Testis (tissue), 5 donors: ENCODE measurements at regions of chr3 and their contacts with region 1.

Region 1: DNA sequence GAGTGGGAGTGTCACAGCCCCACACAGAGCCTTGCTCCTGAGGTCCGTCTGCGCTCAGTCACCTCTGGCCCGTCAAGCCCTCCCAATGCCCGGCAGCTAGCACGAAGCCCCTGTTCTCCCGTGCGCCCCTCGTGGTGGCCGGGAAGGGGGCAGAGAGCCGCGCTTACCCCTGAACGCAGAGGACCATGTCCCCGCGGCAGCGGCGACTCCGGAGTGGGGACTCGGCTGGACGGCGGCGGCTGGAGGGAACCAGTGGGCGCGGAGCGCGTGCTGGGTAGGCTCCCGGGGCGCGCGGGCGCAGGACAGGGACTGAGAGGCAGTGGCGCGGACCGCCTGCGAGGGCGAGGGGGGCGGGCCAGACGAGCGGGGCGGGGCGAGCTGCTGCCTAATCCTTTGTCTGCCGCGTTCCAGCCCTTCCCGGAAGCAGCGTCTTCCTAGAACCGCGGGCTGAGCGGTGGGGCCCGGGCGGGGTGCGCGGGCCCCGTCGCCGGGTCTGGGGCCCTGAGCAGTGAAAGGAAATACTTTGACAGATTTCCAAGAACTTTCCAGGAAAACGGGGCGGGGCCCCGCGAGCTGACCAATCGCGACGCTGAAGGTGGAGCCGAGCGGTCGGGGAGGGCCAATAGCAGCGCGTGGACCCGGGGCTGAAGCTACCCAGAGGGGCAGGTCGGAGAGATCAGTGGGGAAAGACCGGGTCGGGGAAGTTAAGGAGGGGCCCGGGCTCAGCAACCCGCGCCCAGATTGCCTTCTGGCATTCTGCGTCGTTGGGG is at the start of gene CISH:
- DNase-seq: peak; percentile 95
- H3K4me3 ChIP-seq: peak within 1 kb of the TSS; percentile 61 to 76
- H3K27ac ChIP-seq: peak within 1 kb of the TSS; percentile 76 to 84
- H3K4me1 ChIP-seq: peaks cover 33% of the 10 kb centered on the region
- H3K27me3 ChIP-seq: no peaks in the 10 kb centered on the region
- CTCF ChIP-seq: peak in 2 of 3 experiments; percentile 3 to 38
- POLR2A ChIP-seq: no peak
- total RNA-seq, gene CISH: 1.3 to 3.7 TPM

Region 2: DNA sequence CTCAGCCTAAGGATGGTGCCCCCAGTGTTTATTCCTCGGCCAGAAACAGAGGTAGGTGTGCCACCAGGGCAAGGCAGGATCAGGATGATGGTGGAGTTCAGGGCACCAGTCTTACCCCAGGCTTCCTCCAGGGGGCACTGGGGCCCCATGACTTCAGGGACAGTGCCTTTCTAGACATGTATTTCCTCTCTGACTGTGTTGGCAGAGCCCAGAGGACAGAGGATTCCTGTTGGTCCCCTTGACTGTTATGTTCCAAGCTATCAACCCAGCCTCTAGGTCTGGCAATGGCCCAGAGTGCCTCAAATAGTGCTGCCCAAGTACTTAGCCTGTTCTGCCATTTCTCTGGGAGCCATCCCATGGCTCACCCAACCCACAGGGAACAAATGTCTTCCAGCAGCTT is 39.5 kb before region 1 on chr3:
- intact Hi-C with region 1: loop called (anchors 5 kb)
- DNase-seq: peak; percentile 77
- H3K4me3 ChIP-seq: no peak overlapping the region
- H3K27ac ChIP-seq: no peak overlapping the region
- H3K4me1 ChIP-seq: peaks cover 14% of the 10 kb centered on the region
- H3K27me3 ChIP-seq: no peaks in the 10 kb centered on the region
- CTCF ChIP-seq: peak; percentile 80 to 86 (median 84)
- POLR2A ChIP-seq: no peak

Region 3: DNA sequence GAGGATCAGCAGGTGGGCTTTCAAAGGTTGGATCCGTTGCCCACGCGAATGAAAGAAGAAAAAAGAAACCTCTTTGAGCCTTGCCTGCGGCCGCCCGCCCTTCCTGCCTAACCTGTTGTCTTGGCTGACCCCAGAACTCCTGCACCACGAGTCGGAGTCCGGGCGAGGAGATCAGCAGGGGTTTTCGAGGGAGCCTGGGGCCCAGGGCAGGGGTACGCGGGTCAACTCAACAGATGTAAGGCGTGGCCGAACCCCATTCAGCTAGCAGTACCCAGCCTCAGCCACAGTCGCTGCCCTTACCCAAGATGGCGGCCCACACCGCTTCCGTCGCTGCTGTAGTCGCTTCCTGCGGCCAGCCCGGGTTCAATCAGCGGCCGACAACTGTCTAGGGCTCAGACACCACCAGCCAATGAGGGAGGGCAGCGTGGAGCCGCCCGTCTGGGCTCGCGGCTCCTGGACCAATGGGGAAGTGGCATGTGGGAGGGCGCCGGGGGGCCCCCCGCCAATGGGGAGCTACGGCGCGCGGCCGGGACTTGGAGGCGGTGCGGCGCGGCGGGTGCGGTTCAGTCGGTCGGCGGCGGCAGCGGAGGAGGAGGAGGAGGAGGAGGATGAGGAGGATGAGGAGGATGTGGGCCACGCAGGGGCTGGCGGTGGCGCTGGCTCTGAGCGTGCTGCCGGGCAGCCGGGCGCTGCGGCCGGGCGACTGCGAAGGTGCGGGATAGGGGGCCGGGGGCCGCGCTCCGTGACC is 773.3 kb after region 1 on chr3 and contains the start of gene MANF:
- intact Hi-C with region 1: loop called (anchors 5 kb)
- DNase-seq: peak; percentile 99
- H3K4me3 ChIP-seq: peak within 1 kb of the TSS; percentile 91 to 96
- H3K27ac ChIP-seq: peak within 1 kb of the TSS; percentile 91 to 96
- H3K4me1 ChIP-seq: peaks cover 14% of the 10 kb centered on the region
- H3K27me3 ChIP-seq: no peaks in the 10 kb centered on the region
- CTCF ChIP-seq: peak in 1 of 3 experiments; percentile 21
- POLR2A ChIP-seq: peak; percentile 1
- total RNA-seq, gene MANF: 48.6 to 62.8 TPM